Brain microvascular endothelial cell (primary cell): ENCODE measurements at regions of chr5 and their contacts with region 1.

Region 1: GRCh38 chr5:35182541-35183535 is 47.4 kb downstream of the PRLR start:
- DNase-seq: peak; percentile 73
- H3K4me3 ChIP-seq: no peak overlapping the region
- H3K27ac ChIP-seq: no peak overlapping the region
- H3K27me3 ChIP-seq: peaks cover 2% of the 10 kb centered on the region
- CTCF ChIP-seq: peak; percentile 82

Region 2: DNA sequence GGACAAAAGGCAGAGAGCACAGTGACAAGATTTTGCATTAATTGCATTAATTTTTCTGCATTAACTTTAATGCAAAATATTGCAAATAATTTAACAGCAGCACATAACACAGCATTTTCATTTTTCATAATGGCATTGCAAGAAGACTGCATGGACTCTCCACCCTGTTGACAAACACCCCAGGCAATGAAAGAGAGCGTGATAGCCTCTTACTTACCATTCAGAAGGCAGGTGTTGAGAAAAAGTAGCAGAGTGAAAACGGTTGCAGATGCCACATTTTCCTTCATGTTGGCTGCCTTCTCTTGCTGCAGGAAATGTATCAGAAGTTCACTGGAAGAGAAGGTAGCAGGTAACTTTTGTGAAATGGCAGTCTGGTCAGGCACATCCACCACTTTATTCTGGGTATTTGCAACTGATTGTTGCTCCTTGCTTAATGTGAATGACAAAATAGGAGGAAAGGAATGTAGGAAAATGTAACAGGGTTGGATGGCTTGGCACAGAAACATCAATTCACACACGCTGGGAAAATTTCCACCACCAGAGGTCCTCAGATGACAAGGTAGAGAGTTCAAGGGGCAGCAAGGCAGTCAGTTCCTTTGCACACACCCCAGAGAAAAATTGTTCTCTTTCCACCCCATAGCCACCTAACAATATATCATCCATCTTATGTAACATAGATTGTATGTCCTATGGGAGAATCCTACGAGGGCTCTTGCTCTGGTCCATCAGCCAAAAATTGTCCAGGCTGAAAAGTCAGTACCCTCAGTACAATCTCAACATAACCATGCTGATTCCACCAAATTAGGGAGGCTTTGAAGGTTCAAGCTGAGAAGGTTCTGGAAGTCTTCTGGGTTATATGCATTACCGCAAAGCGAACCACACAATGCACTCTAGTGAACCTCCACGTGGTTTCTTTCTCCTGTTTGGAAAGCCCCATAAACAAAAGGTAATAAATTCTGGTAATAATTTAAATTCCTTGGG is 93.2 kb before region 1 on chr5:
- in situ Hi-C with region 1: loop called (anchors 25 kb)
- DNase-seq: peak; percentile 60
- H3K4me3 ChIP-seq: no peak overlapping the region
- H3K27ac ChIP-seq: no peak overlapping the region
- H3K27me3 ChIP-seq: no peaks in the 10 kb centered on the region
- CTCF ChIP-seq: peak; percentile 88